Esophagus muscularis mucosa (tissue), 4 donors: ENCODE measurements at regions of chr18 and their contacts with region 1.

Region 1: GRCh38 chr18:22800551-22800951 is 132.6 kb upstream of the RBBP8 start:
- DNase-seq: no peak
- H3K4me3 ChIP-seq: no peak overlapping the region
- H3K27ac ChIP-seq: peak overlapping the region in 1 of 4 donors; percentile 18
- H3K4me1 ChIP-seq: peaks cover 0 to 14% (median 11%) of the 10 kb centered on the region in 4 donors
- H3K27me3 ChIP-seq: no peaks in the 10 kb centered on the region
- CTCF ChIP-seq: no peak
- EP300 ChIP-seq: no peak
- POLR2A ChIP-seq: no peak

Region 2: DNA sequence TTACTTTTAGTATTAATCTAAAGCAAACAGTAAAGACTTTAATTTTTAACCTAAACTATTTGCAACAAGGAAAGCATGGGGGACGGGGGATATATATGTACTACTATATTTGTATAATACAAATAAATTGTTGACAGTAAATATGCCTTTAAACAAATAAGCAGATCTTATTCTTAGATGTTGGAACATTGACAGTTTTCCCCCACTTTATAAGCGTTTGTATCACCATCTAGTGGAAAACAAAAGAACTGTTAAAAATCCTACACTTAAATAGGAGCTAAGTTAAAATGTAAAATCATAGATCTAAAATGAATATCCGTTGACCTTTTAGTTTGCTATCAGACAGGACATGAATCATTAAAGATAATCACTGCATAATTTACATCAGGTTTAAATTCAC is 182.6 kb after region 1 on chr18:
- intact Hi-C with region 1: loop called (anchors 2 kb)
- DNase-seq: no peak
- H3K4me3 ChIP-seq: no peak overlapping the region
- H3K27ac ChIP-seq: no peak overlapping the region
- H3K4me1 ChIP-seq: peaks cover 0 to 8% (median 5%) of the 10 kb centered on the region in 4 donors
- H3K27me3 ChIP-seq: no peaks in the 10 kb centered on the region
- CTCF ChIP-seq: peak; percentile 46 to 54 (median 51)
- EP300 ChIP-seq: no peak
- POLR2A ChIP-seq: no peak

Region 3: GRCh38 chr18:24497031-24497754 is 1696.6 kb after region 1 on chr18:
- intact Hi-C with region 1: no loop called
- DNase-seq: no peak
- H3K4me3 ChIP-seq: no peak overlapping the region
- H3K27ac ChIP-seq: no peak overlapping the region
- H3K4me1 ChIP-seq: no peaks in the 10 kb centered on the region
- H3K27me3 ChIP-seq: no peaks in the 10 kb centered on the region
- CTCF ChIP-seq: no peak
- EP300 ChIP-seq: no peak
- POLR2A ChIP-seq: no peak